PC-3 (cell line): ENCODE measurements at regions of chr1 and their contacts with region 1.

Region 1: DNA sequence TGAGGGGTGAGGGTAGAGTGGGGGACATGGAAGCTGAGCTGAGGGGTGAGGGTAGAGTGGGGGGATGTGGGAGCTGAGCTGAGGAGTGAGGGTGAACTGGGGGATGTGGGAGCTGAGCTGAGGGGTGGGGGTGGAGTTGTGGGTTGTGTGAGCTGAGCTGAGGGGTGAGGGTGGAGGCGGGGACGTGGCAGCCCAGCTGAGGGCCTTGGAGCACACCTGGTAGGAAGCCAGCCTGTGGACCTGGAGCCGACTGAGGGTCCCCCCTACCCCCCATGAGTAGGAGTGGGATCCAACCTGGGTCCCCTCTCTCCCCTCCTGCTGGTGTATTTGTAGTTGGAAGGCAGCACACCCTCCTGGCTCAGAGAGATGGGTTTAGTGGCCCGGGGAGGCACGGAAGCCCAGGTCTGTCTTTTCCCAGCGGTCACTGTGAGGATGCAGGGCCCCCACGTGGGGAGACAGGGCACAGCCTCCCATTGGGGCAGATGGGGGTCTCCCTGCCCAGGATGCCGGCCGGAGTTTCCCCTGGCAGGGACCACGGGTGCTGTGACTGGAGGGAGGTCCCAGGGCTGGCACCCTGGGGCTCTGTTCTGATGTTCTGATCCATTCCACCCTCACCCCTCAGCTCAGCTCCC is 13.2 kb upstream of the NPHP4 start:
- DNase-seq: no peak
- ATAC-seq: no peak
- H3K4me3 ChIP-seq: no peak overlapping the region
- H3K27ac ChIP-seq: no peak overlapping the region
- H3K4me1 ChIP-seq: no peaks in the 10 kb centered on the region
- H3K27me3 ChIP-seq: no peaks in the 10 kb centered on the region
- CTCF ChIP-seq: no peak

Region 2: DNA sequence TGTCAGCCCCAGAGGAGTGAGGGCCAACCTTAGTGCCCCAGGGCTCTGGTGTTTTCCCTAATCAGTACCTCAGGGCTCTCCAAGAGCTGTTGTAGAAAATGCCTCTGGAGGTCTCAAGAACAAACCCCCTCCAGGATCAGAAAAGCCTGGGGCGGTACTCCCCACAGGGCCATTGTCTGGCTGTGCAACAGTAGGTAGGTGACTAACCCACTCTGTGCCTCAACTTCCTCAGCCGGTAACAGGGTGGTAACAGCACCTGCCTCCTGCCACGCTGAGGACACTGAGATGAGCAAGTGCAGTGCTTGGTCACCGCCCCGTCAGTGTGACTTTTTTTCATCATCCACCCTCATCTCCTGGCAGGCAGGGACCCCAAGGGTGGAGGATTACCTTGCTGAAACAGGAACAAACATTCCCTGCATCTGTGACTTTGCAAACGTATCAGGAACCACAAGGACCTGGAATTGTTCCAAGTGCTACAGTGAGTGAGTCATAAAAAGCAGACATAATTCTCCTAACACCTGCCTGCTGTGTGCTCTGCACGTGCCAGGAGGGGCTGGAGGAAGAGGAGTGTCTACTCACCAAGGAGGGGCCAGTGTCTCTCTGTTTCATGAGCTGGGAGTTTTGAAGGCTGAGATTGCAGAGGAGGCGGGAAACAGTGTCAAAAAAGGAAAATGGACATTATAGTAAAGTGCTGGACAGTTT is 454.0 kb before region 1 on chr1:
- CTCF ChIA-PET with region 1: no interaction called
- POLR2A ChIA-PET with region 1: no interaction called
- intact Hi-C with region 1: no loop called
- DNase-seq: peak; percentile 38
- ATAC-seq: no peak
- H3K4me3 ChIP-seq: no peak overlapping the region
- H3K27ac ChIP-seq: no peak overlapping the region
- H3K4me1 ChIP-seq: no peaks in the 10 kb centered on the region
- H3K27me3 ChIP-seq: 0 out of 2 replicates have a peak, but pooled peaks cover 3% of the 10 kb centered on the region
- CTCF ChIP-seq: no peak

Region 3: GRCh38 chr1:5992026-5992813 is 13.2 kb before region 1 on chr1 and contains the start of gene NPHP4:
- CTCF ChIA-PET with region 1: no interaction called
- POLR2A ChIA-PET with region 1: interaction called, 12 read pairs
- intact Hi-C with region 1: no loop called
- DNase-seq: peak; percentile 100
- ATAC-seq: peak; percentile 92
- H3K4me3 ChIP-seq: peak within 1 kb of the TSS; percentile 82
- H3K27ac ChIP-seq: peak within 1 kb of the TSS; percentile 53
- H3K4me1 ChIP-seq: peaks cover 17% of the 10 kb centered on the region
- H3K27me3 ChIP-seq: no peaks in the 10 kb centered on the region
- CTCF ChIP-seq: no peak
- total RNA-seq, gene NPHP4: 18.8 and 23.8 TPM in 2 replicates

Region 4: DNA sequence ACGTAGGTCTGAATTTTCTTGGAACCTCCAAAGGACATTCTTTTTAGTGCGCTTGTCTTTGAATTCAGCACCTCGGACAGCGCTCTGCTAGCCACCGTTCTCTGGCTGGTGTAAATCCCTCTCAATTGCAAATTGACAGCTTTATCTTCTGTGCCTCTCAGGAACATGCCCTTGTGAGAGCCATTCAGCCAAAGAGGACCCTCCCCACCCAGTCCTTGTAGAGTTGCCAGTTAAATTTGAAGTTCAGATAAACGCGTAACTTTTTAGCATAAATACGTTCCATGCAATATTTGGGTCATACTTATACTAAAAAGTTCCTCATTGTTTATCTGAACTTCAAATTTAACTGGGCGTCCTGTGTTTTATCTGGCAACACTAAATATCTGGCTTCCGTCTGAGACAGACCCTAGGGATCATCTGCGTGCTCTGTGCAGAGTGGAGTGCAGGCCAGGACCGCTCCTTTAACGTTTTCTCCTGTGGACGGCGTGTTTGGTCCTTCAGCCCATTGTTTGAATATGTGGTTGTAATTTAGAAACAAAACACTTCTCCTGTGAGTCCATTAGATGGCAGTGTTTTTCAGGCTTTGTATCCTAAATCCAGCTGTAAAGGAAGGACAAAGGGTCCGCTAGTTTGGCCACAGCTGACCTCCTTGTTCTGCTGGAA is 47.3 kb after region 1 on chr1:
- CTCF ChIA-PET with region 1: no interaction called
- POLR2A ChIA-PET with region 1: no interaction called
- intact Hi-C with region 1: no loop called
- DNase-seq: peak; percentile 86
- ATAC-seq: peak; percentile 80
- H3K4me3 ChIP-seq: no peak overlapping the region
- H3K27ac ChIP-seq: no peak overlapping the region
- H3K4me1 ChIP-seq: no peaks in the 10 kb centered on the region
- H3K27me3 ChIP-seq: no peaks in the 10 kb centered on the region
- CTCF ChIP-seq: peak; percentile 94